ENCODE measurements at regions of chr4 and their contacts with region 1.

Region 1: DNA sequence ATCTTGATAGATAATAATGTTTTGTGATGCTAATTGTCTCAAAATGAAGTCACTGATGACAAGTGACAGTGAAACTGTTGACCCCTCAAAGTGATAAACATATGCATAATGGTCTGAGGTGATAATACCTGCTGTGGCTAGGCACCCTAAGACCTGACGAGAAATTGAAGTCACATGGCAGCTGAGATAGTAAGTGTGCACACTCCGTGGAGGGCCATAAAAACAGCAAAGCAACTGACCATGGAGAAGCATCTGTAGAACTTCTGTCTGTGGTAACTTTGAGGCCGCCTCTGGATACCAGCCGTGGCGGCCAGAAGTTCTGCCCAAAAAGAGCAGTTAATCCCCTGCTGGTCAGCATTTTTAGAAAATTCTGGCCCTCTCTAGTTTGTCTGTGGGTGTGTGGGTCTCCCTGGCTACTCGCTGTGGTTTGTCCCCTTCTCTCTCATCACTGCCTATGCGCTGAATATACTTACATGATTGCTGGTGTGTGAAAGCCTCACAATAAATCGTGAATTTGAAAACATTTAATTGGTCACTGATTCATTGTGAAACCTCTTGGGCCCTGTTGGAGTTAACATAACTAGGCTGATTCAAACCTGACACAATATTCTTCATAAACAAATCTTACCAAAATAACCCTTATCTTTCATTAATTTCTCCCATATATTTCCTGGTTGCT is 50.6 kb downstream of the CCDC149 start:
- DNase-seq: no peak
- H3K4me3 ChIP-seq: no peak overlapping the region
- H3K27ac ChIP-seq: no peak overlapping the region
- H3K4me1 ChIP-seq: peaks cover 17% of the 10 kb centered on the region
- H3K27me3 ChIP-seq: no peaks in the 10 kb centered on the region
- CTCF ChIP-seq: no peak
- POLR2A ChIP-seq: no peak

Region 2: DNA sequence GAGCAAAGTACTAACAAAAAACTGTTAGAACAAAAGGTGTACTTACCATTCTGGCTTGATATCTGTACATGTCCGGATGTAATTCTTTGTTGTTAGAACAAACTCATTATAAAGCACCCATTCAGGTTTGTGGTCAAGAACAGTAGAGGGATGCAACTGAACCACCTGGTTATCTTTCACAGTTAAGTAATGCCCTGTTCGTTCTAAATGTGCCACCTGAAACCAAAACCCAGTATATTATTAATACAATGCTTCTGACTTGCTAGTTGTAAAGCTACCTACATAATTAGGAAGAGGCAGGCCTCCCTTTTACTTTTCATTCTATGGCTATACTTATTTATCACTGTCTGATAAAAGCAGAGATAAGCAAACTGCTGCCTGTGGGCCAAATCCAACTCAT is 332.7 kb before region 1 on chr4:
- intact Hi-C with region 1: no loop called
- DNase-seq: no peak
- H3K4me3 ChIP-seq: no peak overlapping the region
- H3K27ac ChIP-seq: no peak overlapping the region
- H3K4me1 ChIP-seq: no peaks in the 10 kb centered on the region
- H3K27me3 ChIP-seq: no peaks in the 10 kb centered on the region
- CTCF ChIP-seq: no peak
- POLR2A ChIP-seq: no peak

Region 3: DNA sequence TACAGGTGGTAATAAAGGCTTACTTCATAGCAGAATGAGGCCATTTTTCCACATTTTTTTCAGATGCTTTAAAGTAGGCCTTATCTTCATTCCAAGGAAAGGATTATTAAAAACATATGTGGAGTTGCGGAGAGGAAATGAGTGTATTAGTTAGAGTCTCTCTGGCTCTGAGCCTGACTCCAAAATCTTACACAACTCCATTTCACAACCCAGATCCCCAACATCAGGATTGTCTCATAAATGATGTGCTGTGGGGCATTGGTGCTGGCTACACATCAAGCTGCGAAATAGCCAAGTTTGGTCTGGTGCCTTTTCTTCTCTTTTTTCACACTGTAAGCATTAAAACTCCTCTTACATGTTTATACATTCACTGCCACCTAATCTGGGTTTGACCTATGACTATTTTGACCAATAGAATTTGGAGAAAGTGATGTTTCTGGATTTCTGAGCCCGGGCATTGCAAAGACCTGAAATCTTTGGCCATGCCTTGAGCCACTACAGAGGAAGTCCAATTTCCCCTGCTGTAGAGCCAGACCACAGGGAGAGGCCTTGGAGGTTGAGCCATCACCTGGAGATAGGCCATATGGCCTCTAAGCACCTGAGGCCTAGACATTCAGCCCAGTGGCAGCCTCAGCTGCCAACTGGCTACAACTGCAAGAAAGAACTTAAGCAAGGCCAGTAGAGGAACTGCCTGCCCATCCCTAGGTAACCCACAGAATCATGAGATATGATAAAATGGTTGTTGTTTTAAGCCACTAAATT is 83.6 kb before region 1 on chr4:
- intact Hi-C with region 1: no loop called
- DNase-seq: peak in 1 of 2 donors; percentile 94
- H3K4me3 ChIP-seq: no peak overlapping the region
- H3K27ac ChIP-seq: peak overlapping the region; percentile 36
- H3K4me1 ChIP-seq: peaks cover 44% of the 10 kb centered on the region
- H3K27me3 ChIP-seq: no peaks in the 10 kb centered on the region
- CTCF ChIP-seq: no peak
- POLR2A ChIP-seq: no peak

Region 4: DNA sequence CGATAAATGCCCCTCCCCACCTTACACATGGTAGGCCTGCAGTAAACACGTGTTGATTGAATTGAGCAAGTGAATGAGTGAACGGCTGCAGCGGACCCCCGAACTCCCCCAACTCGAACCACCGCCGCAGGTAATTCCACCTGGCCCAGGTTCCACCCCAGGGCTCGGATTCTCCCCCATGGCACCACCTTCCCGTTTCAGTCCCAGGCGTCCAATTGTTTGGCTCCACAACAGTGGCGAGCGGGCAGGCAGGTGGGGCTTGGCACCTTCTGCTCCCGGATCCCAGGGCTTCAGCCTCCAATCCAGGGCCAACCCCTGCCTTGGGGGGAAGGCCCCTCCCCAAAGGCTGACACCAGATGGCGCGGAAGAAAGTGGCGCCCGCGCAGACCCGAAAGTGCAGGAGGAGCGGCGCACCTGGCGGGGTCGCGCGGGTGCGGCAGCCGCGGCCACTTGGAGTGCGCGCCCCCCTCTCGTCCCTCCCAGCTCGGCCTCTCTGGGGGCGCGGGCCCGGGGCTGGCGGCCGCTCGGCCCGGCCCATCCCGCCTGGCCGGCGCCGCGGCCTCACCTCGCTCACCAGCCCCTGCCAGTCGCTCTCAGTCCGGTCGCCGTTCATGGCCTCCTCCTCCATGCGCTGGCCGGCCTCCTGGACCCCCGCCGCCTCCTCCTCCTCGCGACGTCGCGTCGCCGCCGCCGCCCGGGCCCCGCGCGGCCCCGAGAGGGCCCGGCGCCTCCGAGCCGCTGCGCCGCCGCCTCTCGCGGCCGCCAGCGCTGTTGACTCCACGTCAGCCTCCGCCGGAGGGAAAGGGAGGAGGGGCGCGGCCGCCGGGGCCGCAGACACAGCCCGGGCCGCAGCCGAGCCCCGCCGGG is 50.3 kb after region 1 on chr4 and contains the start of gene CCDC149:
- intact Hi-C with region 1: loop called (anchors 5 kb)
- DNase-seq: no peak
- H3K4me3 ChIP-seq: peak within 1 kb of the TSS; percentile 63 to 82
- H3K27ac ChIP-seq: peak within 1 kb of the TSS; percentile 92
- H3K4me1 ChIP-seq: peaks cover 13% of the 10 kb centered on the region
- H3K27me3 ChIP-seq: no peaks in the 10 kb centered on the region
- CTCF ChIP-seq: no peak
- POLR2A ChIP-seq: no peak
- total RNA-seq, gene CCDC149: 16.7 TPM

Measured in vagina (tissue), 2 donors.